ENCODE measurements at regions of chr5 and their contacts with region 1.

Region 1: DNA sequence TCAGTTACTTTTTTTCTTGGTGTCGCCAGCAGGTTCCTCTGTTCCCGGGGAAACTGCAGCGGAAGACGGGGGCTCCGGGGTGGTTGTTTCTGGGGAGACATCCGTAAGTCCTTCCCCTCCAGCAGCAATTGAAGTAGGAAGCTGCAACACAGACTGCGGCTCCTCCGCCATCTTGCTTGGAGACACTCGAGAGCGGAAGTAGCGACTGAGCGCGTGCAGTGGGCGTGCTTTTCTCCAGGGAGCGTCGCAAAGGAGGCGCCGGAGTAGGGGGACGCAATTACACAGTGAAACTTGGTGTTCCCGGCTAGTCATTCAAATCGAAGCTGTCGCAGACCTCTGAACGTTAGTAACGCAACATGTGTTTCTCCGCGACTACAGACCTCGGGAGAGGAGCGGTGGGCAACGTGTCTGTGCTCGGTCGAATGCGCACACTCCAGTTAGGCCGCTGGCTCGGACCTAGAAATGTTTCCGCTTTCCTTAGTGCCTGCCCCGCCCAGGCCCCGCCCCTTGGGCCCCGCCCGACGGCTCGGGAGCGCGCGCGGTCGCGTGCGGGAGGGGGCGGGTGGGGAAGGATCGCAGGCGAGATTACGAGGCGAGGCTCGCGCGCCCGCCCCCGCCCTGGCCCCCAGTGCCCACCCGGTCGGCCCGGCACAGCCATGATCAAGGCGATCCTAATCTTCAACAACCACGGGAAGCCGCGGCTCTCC is at the starts of genes AP3S1 and ATG12:
- DNase-seq: peak; percentile 95
- H3K4me3 ChIP-seq: peak within 1 kb of the TSS; percentile 66 to 90 (median 67)
- H3K27ac ChIP-seq: peak within 1 kb of the TSS; percentile 86
- H3K4me1 ChIP-seq: peaks cover 41% of the 10 kb centered on the region
- H3K27me3 ChIP-seq: no peaks in the 10 kb centered on the region
- CTCF ChIP-seq: no peak
- POLR2A ChIP-seq: peak; percentile 91
- total RNA-seq, gene AP3S1: 81.2 and 85.7 TPM in 2 replicates
- total RNA-seq, gene ATG12: 50.3 and 62.0 TPM in 2 replicates

Region 2: DNA sequence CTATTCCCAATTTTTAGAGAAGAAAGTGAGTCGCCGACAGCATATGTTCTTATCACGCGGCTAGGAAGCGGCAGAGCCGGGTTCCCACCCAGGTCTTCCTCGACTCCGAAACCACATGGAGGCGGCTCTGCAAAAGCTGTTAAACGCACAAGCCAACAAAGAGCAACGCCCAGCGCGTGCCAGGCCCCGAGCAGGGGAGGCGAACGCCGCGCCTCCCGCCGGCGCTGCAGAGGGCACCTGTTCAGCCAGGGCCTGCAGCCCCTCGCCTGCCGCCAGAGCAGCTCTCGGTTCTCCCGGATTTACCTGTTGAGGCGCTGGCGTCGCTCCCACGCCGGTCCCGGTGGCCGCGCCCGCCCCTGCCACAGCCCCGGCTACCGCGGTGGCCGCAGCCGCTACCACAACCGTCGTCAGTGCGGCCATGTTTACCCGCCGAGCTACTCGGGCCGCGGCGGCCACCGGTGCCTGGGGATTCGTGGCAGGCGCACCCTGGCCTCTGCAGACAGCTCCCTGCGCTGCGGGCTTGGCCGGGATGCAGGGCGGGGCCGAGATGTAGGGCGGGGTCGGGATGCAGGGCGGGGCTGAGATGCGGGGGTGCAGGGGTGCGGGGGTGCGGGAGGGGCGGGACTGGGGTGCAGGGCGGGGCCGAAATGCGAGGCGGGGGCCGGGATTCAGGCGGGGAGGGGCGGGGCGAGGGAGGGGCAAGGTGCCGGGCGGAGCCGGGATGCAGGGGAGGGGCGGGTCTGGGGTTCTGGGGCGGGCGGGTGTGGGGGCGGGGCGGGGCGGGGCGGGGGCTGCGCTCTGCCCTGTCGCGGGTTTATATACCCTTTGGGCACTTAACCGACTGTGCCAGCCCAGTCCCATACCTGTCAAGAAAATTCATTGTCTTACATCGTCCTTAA is 545.2 kb before region 1 on chr5 and contains the start of gene CCDC112:
- CTCF ChIA-PET with region 1: no interaction called
- POLR2A ChIA-PET with region 1: no interaction called
- dilution Hi-C with region 1: no loop called
- intact Hi-C with region 1: loop called (anchors 5 kb)
- DNase-seq: peak; percentile 75
- H3K4me3 ChIP-seq: peak within 1 kb of the TSS; percentile 91 to 93 (median 92)
- H3K27ac ChIP-seq: peak within 1 kb of the TSS; percentile 3
- H3K4me1 ChIP-seq: peaks cover 9% of the 10 kb centered on the region
- H3K27me3 ChIP-seq: peaks cover 0 to 2% of the 10 kb centered on the region in 2 experiments
- CTCF ChIP-seq: peak in 1 of 2 donors; percentile 9
- POLR2A ChIP-seq: peak; percentile 85
- total RNA-seq, gene CCDC112: 9.6 TPM in 2 replicates

Region 3: GRCh38 chr5:115634343-115635132 is 207.0 kb before region 1 on chr5:
- CTCF ChIA-PET with region 1: interaction called, 47 read pairs
- POLR2A ChIA-PET with region 1: no interaction called
- dilution Hi-C with region 1: no loop called
- intact Hi-C with region 1: loop called (anchors 1 kb)
- DNase-seq: peak; percentile 78
- H3K4me3 ChIP-seq: peak overlapping the region in 2 of 3 experiments; percentile 21 to 55
- H3K27ac ChIP-seq: no peak overlapping the region
- H3K4me1 ChIP-seq: peaks cover 5% of the 10 kb centered on the region
- H3K27me3 ChIP-seq: peaks cover 2 to 5% of the 10 kb centered on the region in 2 experiments
- CTCF ChIP-seq: peak; percentile 75 to 89
- POLR2A ChIP-seq: no peak

Region 4: GRCh38 chr5:115686051-115686737 is 155.3 kb before region 1 on chr5:
- CTCF ChIA-PET with region 1: no interaction called
- POLR2A ChIA-PET with region 1: no interaction called
- dilution Hi-C with region 1: no loop called
- intact Hi-C with region 1: no loop called
- DNase-seq: no peak
- H3K4me3 ChIP-seq: no peak overlapping the region
- H3K27ac ChIP-seq: no peak overlapping the region
- H3K4me1 ChIP-seq: no peaks in the 10 kb centered on the region
- H3K27me3 ChIP-seq: peaks cover 4 to 8% of the 10 kb centered on the region in 2 experiments
- CTCF ChIP-seq: no peak
- POLR2A ChIP-seq: no peak

Region 5: DNA sequence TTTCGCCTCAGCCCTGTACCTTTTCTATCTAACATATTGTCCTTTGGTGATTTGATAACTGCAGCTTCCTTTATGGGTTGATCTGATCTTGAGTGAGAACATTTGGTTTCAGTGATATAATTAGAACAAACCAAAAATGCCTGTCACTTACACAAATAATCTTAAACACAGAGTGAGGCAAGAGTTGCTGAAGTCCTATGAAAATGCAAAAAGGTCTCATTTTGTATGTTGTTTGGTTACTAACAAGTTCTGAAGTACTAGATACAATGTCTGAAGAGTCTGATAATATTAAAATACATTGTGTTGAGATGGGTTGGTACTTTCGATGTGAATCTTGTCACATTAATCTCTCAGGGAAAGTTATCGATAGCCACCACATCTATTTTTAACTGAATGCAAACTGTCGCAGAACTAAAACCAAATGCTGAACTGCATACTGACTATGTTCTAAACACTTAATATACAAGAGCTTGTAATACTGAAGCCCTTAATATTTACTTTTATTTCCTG is 145.3 kb before region 1 on chr5:
- CTCF ChIA-PET with region 1: no interaction called
- POLR2A ChIA-PET with region 1: no interaction called
- dilution Hi-C with region 1: no loop called
- intact Hi-C with region 1: no loop called
- DNase-seq: no peak
- H3K4me3 ChIP-seq: no peak overlapping the region
- H3K27ac ChIP-seq: no peak overlapping the region
- H3K4me1 ChIP-seq: no peaks in the 10 kb centered on the region
- H3K27me3 ChIP-seq: peaks cover 3 to 4% of the 10 kb centered on the region in 2 experiments
- CTCF ChIP-seq: no peak
- POLR2A ChIP-seq: no peak

Region 6: GRCh38 chr5:115831163-115831768 is 10.3 kb before region 1 on chr5:
- CTCF ChIA-PET with region 1: interaction called, 7 read pairs
- POLR2A ChIA-PET with region 1: interaction called, 5 read pairs
- dilution Hi-C with region 1: no loop called
- intact Hi-C with region 1: loop called (anchors 1 kb)
- DNase-seq: peak; percentile 51
- H3K4me3 ChIP-seq: no peak overlapping the region
- H3K27ac ChIP-seq: no peak overlapping the region
- H3K4me1 ChIP-seq: no peaks in the 10 kb centered on the region
- H3K27me3 ChIP-seq: no peaks in the 10 kb centered on the region
- CTCF ChIP-seq: peak; percentile 66 to 68
- POLR2A ChIP-seq: no peak

Region 7: DNA sequence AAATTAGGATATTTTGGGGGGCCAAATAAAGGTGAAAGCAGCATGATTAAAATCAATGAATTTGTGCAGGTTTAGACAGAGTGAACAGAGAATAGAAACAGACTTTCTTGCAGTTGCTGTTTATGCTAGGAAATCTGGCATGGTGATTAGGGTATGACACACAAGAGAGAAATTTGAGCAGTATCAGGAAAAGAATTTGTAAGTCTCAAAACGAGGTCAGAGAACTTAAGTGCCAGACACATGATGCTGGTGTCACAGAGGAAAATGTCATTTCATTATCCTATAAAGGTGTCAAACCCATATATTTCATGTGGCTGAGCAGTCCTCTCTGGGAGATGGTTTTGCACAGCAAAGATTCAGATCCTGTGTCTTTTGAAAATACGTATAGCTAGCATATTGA is 136.5 kb after region 1 on chr5:
- CTCF ChIA-PET with region 1: no interaction called
- POLR2A ChIA-PET with region 1: no interaction called
- dilution Hi-C with region 1: no loop called
- intact Hi-C with region 1: loop called (anchors 1 kb)
- DNase-seq: peak; percentile 90
- H3K4me3 ChIP-seq: no peak overlapping the region
- H3K27ac ChIP-seq: peak overlapping the region; percentile 45
- H3K4me1 ChIP-seq: peaks cover 19% of the 10 kb centered on the region
- H3K27me3 ChIP-seq: no peaks in the 10 kb centered on the region
- CTCF ChIP-seq: no peak
- POLR2A ChIP-seq: peak; percentile 54

Measured in endothelial cell of umbilical vein (primary cell).